CD8-positive, alpha-beta T cell (primary cell): ENCODE measurements at regions of chr1 and their contacts with region 1.

Region 1: DNA sequence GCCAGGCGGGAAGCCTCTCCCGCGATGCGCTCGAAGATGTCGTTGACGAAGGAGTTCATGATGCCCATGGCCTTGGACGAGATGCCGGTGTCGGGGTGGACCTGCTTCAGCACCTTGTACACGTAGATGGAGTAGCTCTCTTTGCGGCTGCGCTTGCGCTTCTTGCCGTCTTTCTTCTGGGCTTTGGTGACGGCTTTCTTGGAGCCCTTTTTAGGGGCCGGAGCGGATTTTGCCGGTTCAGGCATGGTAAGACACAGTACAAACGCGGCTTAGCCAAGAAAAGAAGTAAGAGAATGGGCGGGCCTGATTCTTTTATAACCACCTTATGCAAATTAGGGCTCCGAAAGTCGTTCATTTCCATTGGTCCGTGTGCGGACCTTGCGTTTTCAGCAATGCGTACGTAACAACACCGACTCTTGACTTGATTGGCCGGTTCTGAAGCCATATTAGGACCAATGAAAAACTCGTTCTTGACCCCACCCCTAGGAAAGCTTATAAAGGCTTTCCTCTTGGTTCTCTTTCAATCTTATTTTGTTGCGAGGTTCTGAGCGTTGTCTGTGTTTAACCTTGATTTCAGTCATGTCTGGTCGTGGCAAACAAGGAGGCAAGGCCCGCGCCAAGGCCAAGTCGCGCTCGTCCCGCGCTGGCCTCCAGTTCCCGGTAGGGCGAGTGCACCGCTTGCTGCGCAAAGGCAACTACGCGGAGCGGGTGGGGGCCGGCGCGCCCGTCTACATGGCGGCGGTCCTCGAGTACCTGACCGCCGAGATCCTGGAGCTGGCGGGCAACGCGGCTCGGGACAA is 12.8 kb upstream of the BOLA1 start:
- DNase-seq: peak; percentile 73 to 99 (median 82)
- ATAC-seq: peak; percentile 64
- H3K4me3 ChIP-seq: peak overlapping the region; percentile 69 to 74
- H3K4me3 Mint-ChIP-seq: no peak overlapping the region
- H3K27ac ChIP-seq: peak overlapping the region; percentile 91 to 95
- H3K27ac Mint-ChIP-seq: no peak overlapping the region
- H3K4me1 ChIP-seq: peaks cover 32% of the 10 kb centered on the region
- H3K4me1 Mint-ChIP-seq: peaks cover 13% of the 10 kb centered on the region
- H3K27me3 ChIP-seq: no peaks in the 10 kb centered on the region
- H3K27me3 Mint-ChIP-seq: no peaks in the 10 kb centered on the region
- CTCF ChIP-seq: no peak

Region 2: DNA sequence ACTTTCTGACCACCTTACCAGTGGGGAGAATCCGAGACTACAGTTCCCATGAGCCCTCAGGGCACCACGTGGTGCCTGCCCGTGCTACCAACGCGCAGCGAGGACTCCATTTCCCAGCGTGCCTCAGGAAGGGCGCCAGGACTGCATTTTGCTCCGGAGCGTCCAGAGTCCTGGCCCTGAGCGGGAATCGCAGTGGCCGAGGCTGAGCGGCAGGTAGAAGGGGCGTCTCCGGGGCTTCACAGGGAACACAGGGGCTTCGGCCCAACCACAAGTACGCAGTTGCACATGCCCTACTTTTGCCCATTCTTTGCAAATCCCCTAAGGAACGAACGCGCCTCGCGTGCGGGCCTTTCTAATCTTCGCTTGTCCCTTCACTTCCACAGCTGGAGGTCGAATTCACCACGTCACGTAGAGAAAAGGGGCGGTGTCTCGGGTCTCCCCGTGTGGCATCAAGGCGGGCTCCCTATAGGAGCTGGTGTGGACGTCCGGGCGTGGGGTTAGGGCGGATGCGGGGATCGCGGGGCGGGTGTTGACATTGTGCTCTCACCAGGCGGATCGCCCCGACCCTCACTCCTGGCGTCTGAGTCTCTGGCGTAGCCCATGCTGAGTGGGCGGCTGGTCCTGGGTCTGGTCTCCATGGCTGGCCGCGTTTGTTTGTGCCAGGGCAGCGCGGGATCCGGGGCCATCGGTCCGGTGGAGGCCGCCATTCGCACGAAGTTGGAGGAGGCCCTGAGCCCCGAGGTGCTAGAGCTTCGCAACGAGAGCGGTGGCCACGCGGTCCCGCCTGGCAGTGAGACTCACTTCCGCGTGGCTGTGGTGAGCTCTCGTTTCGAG is 13.1 kb after region 1 on chr1 and contains the start of gene BOLA1:
- CTCF ChIA-PET with region 1: interaction called, 4 read pairs
- POLR2A ChIA-PET with region 1: interaction called, 116 read pairs
- intact Hi-C with region 1: loop called (anchors 1 kb)
- DNase-seq: peak; percentile 56 to 91 (median 85)
- ATAC-seq: peak; percentile 96
- H3K4me3 ChIP-seq: peak within 1 kb of the TSS; percentile 67 to 73
- H3K4me3 Mint-ChIP-seq: peak within 1 kb of the TSS; percentile 89
- H3K27ac ChIP-seq: peak within 1 kb of the TSS; percentile 66 to 82
- H3K27ac Mint-ChIP-seq: peak within 1 kb of the TSS; percentile 92
- H3K4me1 ChIP-seq: peaks cover 11% of the 10 kb centered on the region
- H3K4me1 Mint-ChIP-seq: peaks cover 18% of the 10 kb centered on the region
- H3K27me3 ChIP-seq: no peaks in the 10 kb centered on the region
- H3K27me3 Mint-ChIP-seq: no peaks in the 10 kb centered on the region
- CTCF ChIP-seq: no peak
- total RNA-seq, gene BOLA1: 3.3 to 4.0 TPM

Region 3: GRCh38 chr1:149972547-149972946 is 86.0 kb after region 1 on chr1:
- CTCF ChIA-PET with region 1: no interaction called
- POLR2A ChIA-PET with region 1: no interaction called
- intact Hi-C with region 1: no loop called
- DNase-seq: no peak
- ATAC-seq: no peak
- H3K4me3 ChIP-seq: no peak overlapping the region
- H3K4me3 Mint-ChIP-seq: no peak overlapping the region
- H3K27ac ChIP-seq: no peak overlapping the region
- H3K27ac Mint-ChIP-seq: no peak overlapping the region
- H3K4me1 ChIP-seq: no peaks in the 10 kb centered on the region
- H3K4me1 Mint-ChIP-seq: no peaks in the 10 kb centered on the region
- H3K27me3 ChIP-seq: no peaks in the 10 kb centered on the region
- H3K27me3 Mint-ChIP-seq: no peaks in the 10 kb centered on the region
- CTCF ChIP-seq: no peak

Region 4: DNA sequence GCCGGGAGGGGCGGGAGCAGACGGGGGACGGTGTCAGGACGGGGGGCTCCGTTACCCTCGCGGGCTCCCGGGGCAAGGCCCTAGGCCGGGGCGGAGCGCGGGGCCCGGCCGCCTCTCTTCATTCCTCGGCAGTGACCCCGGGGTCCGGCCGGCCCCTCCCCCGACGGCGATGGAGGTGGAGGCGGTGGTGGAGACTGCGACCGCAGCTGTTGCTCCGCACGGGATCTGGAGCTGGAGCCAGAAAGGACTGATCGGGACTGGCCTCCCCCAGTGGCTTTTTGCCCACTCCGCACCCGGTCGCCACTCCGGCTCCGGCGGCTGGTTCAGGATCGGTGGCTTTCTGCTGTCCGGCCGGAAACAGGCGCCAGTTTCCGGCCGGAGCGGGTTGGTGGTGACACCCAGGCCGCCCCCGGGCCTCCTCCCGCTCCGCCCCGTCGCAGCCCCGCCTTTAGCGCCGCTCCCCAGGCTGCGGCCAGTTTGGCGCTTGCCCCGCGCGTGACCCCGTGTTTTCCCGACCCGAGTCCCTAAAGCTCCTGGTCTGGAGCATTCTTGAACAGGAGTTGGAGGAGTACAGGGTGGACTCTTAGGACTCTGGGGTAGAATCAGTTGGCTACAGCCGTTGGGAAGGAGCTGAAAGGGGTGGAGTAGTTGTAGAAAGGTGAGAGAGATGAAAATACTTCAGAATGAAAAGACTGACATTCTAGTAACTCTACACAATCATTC is 124.0 kb after region 1 on chr1 and contains the start of gene OTUD7B:
- CTCF ChIA-PET with region 1: no interaction called
- POLR2A ChIA-PET with region 1: interaction called, 18 read pairs
- intact Hi-C with region 1: no loop called
- DNase-seq: peak; percentile 42 to 82 (median 65)
- ATAC-seq: peak; percentile 82
- H3K4me3 ChIP-seq: peak within 1 kb of the TSS; percentile 88 to 95
- H3K4me3 Mint-ChIP-seq: peak within 1 kb of the TSS; percentile 88
- H3K27ac ChIP-seq: peak within 1 kb of the TSS; percentile 59 to 67
- H3K27ac Mint-ChIP-seq: peak within 1 kb of the TSS; percentile 91
- H3K4me1 ChIP-seq: peaks cover 10% of the 10 kb centered on the region
- H3K4me1 Mint-ChIP-seq: peaks cover 29% of the 10 kb centered on the region
- H3K27me3 ChIP-seq: no peaks in the 10 kb centered on the region
- H3K27me3 Mint-ChIP-seq: no peaks in the 10 kb centered on the region
- CTCF ChIP-seq: no peak
- total RNA-seq, gene OTUD7B: 2.1 to 2.2 TPM

Region 5: GRCh38 chr1:150083907-150084306 is 197.3 kb after region 1 on chr1:
- CTCF ChIA-PET with region 1: no interaction called
- POLR2A ChIA-PET with region 1: no interaction called
- intact Hi-C with region 1: no loop called
- DNase-seq: no peak
- ATAC-seq: no peak
- H3K4me3 ChIP-seq: no peak overlapping the region
- H3K4me3 Mint-ChIP-seq: no peak overlapping the region
- H3K27ac ChIP-seq: no peak overlapping the region
- H3K27ac Mint-ChIP-seq: peak overlapping the region; percentile 1
- H3K4me1 ChIP-seq: no peaks in the 10 kb centered on the region
- H3K4me1 Mint-ChIP-seq: peaks cover 2% of the 10 kb centered on the region
- H3K27me3 ChIP-seq: no peaks in the 10 kb centered on the region
- H3K27me3 Mint-ChIP-seq: no peaks in the 10 kb centered on the region
- CTCF ChIP-seq: no peak

Region 6: DNA sequence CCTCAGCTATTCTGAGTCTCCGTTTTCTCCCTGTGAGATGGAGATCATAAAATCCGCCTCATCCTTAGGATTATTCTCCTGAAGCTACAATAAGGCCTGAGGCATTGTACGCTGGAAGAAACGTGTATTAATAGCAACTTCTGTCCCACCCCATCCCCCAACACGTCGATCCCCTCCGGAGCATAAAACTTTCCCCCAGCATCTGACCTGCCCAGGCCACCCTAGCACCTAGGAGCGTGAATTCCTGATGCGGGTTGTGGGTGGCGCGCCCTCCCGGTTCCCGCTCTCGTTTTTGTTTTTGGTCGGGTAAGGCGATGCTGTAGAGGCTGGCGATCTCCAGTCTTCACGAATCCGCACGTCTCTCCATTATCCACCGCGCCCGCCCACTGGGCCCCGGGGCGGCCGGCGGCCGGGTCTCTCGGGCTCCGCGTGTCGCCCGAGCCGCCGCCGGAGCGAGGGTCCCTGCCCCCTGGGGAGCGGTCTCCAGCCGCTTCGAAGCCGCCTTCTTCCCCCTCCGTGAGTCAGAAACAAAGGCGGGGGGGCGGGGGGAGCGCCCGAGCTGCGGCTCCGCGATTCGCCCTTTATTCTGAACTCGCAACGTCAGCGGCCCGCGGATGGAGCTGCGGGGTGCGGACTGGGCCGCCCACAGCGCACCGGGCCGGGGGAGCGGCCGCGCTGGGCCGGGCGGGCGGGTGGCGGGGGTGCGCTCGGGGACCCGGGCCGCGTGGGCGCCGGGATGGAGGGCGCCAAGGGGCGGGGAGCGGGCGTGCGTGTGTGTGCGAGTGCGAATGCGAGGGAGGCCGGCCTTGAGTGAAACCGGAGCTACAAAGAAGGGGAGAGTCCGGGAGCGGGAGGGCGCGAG is 262.9 kb after region 1 on chr1 and contains the start of gene PLEKHO1:
- CTCF ChIA-PET with region 1: interaction called, 3 read pairs
- POLR2A ChIA-PET with region 1: interaction called, 13 read pairs
- intact Hi-C with region 1: no loop called
- DNase-seq: peak; percentile 58 to 90 (median 85)
- ATAC-seq: peak; percentile 63
- H3K4me3 ChIP-seq: peak within 1 kb of the TSS; percentile 69 to 87
- H3K4me3 Mint-ChIP-seq: peak within 1 kb of the TSS; percentile 95
- H3K27ac ChIP-seq: peak within 1 kb of the TSS; percentile 72 to 79
- H3K27ac Mint-ChIP-seq: peak within 1 kb of the TSS; percentile 97
- H3K4me1 ChIP-seq: peaks cover 36% of the 10 kb centered on the region
- H3K4me1 Mint-ChIP-seq: peaks cover 70% of the 10 kb centered on the region
- H3K27me3 ChIP-seq: no peaks in the 10 kb centered on the region
- H3K27me3 Mint-ChIP-seq: no peaks in the 10 kb centered on the region
- CTCF ChIP-seq: no peak
- total RNA-seq, gene PLEKHO1: 82.5 to 90.1 TPM

Region 7: GRCh38 chr1:150235852-150236613 is 349.4 kb after region 1 on chr1 and contains the start of gene ANP32E:
- CTCF ChIA-PET with region 1: no interaction called
- POLR2A ChIA-PET with region 1: interaction called, 24 read pairs
- intact Hi-C with region 1: no loop called
- DNase-seq: peak; percentile 86 to 99 (median 94)
- ATAC-seq: peak; percentile 90
- H3K4me3 ChIP-seq: peak within 1 kb of the TSS; percentile 72 to 80
- H3K4me3 Mint-ChIP-seq: no peak within 1 kb of the TSS
- H3K27ac ChIP-seq: peak within 1 kb of the TSS; percentile 89 to 96
- H3K27ac Mint-ChIP-seq: peak within 1 kb of the TSS; percentile 93
- H3K4me1 ChIP-seq: peaks cover 12% of the 10 kb centered on the region
- H3K4me1 Mint-ChIP-seq: peaks cover 18% of the 10 kb centered on the region
- H3K27me3 ChIP-seq: no peaks in the 10 kb centered on the region
- H3K27me3 Mint-ChIP-seq: no peaks in the 10 kb centered on the region
- CTCF ChIP-seq: no peak
- total RNA-seq, gene ANP32E: 30.6 to 35.0 TPM